Mammary epithelial cell (primary cell): ENCODE measurements at regions of chr3 and their contacts with region 1.

Region 1: DNA sequence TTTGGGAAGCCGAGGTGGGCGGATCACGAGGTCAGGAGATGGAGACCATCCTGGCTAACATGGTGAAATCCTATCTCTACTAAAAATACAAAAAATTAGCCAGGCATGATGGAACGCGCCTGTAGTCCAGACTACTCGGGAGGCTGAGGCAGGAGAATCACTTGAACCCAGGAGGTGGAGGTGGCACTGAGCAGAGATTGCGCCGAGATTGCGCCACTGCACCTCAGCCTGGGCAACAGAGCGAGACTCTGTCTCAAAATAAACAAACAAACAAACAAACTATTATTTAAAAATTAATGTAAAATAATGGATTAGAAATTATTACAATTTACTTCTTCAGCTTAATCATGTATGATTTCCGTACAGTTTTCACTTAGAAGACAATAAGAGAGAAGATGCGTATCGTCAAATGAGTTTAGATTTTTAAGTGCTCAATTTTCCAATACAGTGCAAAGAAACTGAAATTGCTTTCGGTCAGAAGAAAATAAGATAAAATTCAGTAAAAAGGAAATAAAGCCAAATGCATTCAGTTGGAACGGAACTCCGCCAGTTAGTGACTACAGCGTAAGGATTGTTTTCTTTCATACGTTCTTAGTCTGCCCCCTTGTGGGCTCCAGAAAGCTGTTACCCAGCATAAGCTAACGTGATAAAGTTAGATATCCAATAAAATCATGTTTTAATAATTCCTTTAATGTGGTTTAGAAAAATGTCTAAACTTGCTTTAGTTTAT is 24.8 kb downstream of the AADAC start:
- DNase-seq: peak; percentile 55
- H3K4me3 ChIP-seq: no peak overlapping the region
- H3K27ac ChIP-seq: no peak overlapping the region
- H3K4me1 ChIP-seq: peaks cover 18% of the 10 kb centered on the region
- H3K27me3 ChIP-seq: no peaks in the 10 kb centered on the region
- CTCF ChIP-seq: peak; percentile 77 to 78

Region 2: DNA sequence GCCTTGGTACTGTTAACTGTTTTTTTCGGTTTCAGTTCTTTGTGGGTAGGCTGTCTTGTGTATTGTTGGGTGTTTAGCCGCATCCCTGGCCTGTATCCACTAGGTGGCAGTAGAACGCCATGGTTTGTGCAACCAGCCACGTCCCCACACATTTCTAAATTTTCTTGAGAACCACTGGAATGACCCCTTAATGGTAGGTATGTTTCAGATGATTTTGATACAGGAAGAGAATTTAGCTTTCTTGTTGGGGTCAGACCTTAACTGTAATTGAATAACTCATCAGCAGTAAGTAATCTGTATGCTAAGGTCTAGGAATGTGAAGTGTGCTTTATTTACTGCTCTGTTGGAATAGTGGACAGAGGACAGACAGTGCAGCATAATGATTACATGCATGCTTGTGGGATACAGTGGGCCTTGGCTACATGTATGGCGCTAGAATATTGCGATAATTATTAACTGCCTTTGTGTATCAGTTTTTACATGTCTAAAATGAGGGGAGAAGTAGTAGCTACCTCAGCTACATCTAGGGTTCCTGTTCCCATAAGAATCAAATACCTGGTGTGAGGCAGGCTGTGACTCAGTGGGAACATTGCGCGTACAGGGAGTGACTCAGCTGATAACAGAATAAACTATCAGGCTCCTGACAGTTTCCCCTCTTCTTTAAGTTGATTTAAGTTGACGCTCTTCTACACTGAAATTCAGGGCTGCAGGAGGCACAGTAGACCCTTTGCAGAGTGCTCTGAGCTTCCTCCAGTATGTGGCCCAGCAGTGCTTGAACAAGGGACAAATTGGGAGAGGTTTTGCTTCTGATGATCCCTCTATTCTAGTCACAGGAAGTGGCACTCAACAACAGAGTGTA is 610.7 kb before region 1 on chr3:
- CTCF ChIA-PET with region 1: no interaction called
- dilution Hi-C with region 1: no loop called
- in situ Hi-C with region 1: no loop called
- intact Hi-C with region 1: loop called (anchors 2 kb)
- DNase-seq: peak; percentile 63
- H3K4me3 ChIP-seq: no peak overlapping the region
- H3K27ac ChIP-seq: no peak overlapping the region
- H3K4me1 ChIP-seq: peaks cover 27% of the 10 kb centered on the region
- H3K27me3 ChIP-seq: no peaks in the 10 kb centered on the region
- CTCF ChIP-seq: peak; percentile 91 to 94

Region 3: DNA sequence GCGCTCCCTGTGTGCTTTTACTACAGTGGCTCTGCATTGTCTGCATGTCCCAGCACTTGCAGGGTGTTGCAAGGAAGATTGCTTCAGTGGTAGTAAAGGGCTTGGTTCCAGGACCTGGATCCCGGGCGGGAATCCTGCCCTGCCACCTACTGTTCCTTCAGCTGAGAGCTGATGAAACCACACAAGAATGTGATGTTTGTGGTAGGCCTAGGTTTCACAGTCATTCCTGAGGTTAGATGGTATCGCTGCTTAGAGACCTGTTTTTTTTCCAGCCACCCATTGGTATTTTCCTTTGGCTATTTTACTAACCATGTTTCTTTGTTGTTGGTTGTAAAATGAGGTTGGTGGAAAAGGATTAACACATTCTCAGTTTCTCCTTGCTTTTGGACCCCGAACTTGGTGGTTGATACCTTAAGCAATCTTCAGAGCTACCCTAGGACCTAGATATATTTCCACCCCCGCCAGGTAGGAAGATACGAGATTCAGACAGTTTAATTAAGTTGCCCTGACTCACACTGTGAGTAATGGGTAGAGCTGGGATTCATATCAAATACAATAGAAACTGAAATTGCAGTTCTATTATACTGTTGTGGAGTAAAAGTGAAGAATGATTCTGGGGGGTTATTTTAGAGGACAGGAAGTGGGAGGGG is 533.5 kb before region 1 on chr3:
- CTCF ChIA-PET with region 1: no interaction called
- dilution Hi-C with region 1: no loop called
- in situ Hi-C with region 1: loop called in 1 of 2 experiments (anchors 25 kb)
- intact Hi-C with region 1: no loop called
- DNase-seq: peak; percentile 99
- H3K4me3 ChIP-seq: peak overlapping the region; percentile 10 to 23 (median 20)
- H3K27ac ChIP-seq: peak overlapping the region; percentile 97
- H3K4me1 ChIP-seq: peaks cover 88% of the 10 kb centered on the region
- H3K27me3 ChIP-seq: no peaks in the 10 kb centered on the region
- CTCF ChIP-seq: peak in 1 of 2 donors; percentile 36

Region 4: GRCh38 chr3:151439652-151440129 is 399.1 kb before region 1 on chr3:
- CTCF ChIA-PET with region 1: no interaction called
- dilution Hi-C with region 1: no loop called
- in situ Hi-C with region 1: loop called (anchors 5 to 25 kb)
- intact Hi-C with region 1: loop called (anchors 1 kb)
- DNase-seq: peak; percentile 60
- H3K4me3 ChIP-seq: no peak overlapping the region
- H3K27ac ChIP-seq: no peak overlapping the region
- H3K4me1 ChIP-seq: no peaks in the 10 kb centered on the region
- H3K27me3 ChIP-seq: no peaks in the 10 kb centered on the region
- CTCF ChIP-seq: peak; percentile 73 to 80

Region 5: GRCh38 chr3:151660885-151661284 is 177.9 kb before region 1 on chr3:
- CTCF ChIA-PET with region 1: no interaction called
- dilution Hi-C with region 1: no loop called
- in situ Hi-C with region 1: no loop called
- intact Hi-C with region 1: loop called (anchors 5 kb)
- DNase-seq: no peak
- H3K4me3 ChIP-seq: no peak overlapping the region
- H3K27ac ChIP-seq: no peak overlapping the region
- H3K4me1 ChIP-seq: no peaks in the 10 kb centered on the region
- H3K27me3 ChIP-seq: peaks cover 6% of the 10 kb centered on the region
- CTCF ChIP-seq: peak in 1 of 2 donors; percentile 14

Region 6: GRCh38 chr3:151918253-151919029 is 79.7 kb after region 1 on chr3:
- CTCF ChIA-PET with region 1: no interaction called
- dilution Hi-C with region 1: no loop called
- in situ Hi-C with region 1: no loop called
- intact Hi-C with region 1: loop called (anchors 1 kb)
- DNase-seq: peak; percentile 26
- H3K4me3 ChIP-seq: no peak overlapping the region
- H3K27ac ChIP-seq: no peak overlapping the region
- H3K4me1 ChIP-seq: no peaks in the 10 kb centered on the region
- H3K27me3 ChIP-seq: no peaks in the 10 kb centered on the region
- CTCF ChIP-seq: peak; percentile 63 to 67